AG04449 (cell line): ENCODE measurements at regions of chr2 and their contacts with region 1.

Region 1: GRCh38 chr2:179129574-179130238 is 79.8 kb upstream of the CCDC141 start:
- DNase-seq: no peak
- H3K4me3 ChIP-seq: no peak overlapping the region
- CTCF ChIP-seq: peak; percentile 34

Region 2: DNA sequence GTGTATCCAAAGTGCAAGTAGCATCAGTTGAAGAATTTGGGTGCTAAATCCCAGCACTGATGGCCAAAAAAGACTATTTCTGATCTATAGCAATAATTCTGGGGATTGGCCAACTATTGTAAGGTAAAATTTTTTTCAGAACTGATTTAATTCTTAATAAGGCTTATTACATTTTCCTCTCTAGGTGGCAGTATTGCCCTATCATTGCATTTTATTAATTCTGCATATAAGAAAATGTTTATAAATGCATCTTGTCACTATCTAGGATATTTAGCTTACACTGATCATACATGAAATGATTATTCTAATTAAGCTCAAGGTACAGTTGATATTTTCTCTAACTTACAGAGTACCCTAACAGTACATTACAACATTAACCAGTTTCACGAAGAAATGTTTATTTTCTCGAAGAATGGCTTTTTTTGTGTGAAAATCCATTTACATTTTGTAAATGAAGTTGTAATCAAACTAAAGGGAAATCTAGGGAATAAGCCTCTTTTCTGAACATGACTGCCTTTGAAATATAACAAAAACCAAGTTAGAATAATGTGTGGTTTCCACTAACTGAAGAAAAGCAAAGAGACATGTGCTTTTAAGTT is 333.5 kb before region 1 on chr2:
- CTCF ChIA-PET with region 1: interaction called, 16 read pairs
- POLR2A ChIA-PET with region 1: no interaction called
- DNase-seq: peak; percentile 5
- H3K4me3 ChIP-seq: no peak overlapping the region
- CTCF ChIP-seq: peak; percentile 27

Region 3: GRCh38 chr2:178891265-178891958 is 238.3 kb before region 1 on chr2:
- CTCF ChIA-PET with region 1: interaction called, 10 read pairs
- POLR2A ChIA-PET with region 1: no interaction called
- DNase-seq: no peak
- H3K4me3 ChIP-seq: no peak overlapping the region
- CTCF ChIP-seq: peak; percentile 74

Region 4: DNA sequence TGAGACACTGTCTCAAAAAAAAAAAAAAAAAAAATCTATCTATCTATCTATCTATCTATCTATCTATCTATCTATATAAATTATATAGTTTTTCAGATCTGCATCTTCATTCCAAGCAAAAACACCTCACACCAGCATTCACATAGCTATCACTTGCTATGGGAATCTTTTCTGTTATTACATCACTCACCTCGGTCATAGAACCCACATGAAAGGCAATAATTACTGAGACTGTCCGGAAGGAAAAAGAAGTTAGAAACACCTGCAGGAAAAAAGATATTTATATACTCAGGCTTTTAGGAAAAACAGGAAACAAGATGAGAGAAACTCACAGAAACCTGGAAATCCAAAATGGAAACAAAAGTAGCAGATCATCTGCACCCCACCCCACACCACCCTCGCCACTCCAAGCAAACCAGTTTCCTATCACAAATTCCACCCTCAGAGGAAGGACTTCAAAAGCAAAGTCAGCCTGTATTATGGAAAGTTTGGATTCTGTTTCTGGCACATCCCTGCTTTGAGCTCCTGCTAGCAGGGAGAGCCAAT is 57.8 kb before region 1 on chr2:
- CTCF ChIA-PET with region 1: no interaction called
- POLR2A ChIA-PET with region 1: no interaction called
- DNase-seq: no peak
- H3K4me3 ChIP-seq: no peak overlapping the region
- CTCF ChIP-seq: no peak

Region 5: GRCh38 chr2:179106676-179107428 is 22.9 kb before region 1 on chr2:
- CTCF ChIA-PET with region 1: interaction called, 11 read pairs
- POLR2A ChIA-PET with region 1: no interaction called
- DNase-seq: peak; percentile 62
- H3K4me3 ChIP-seq: no peak overlapping the region
- CTCF ChIP-seq: no peak

Region 6: DNA sequence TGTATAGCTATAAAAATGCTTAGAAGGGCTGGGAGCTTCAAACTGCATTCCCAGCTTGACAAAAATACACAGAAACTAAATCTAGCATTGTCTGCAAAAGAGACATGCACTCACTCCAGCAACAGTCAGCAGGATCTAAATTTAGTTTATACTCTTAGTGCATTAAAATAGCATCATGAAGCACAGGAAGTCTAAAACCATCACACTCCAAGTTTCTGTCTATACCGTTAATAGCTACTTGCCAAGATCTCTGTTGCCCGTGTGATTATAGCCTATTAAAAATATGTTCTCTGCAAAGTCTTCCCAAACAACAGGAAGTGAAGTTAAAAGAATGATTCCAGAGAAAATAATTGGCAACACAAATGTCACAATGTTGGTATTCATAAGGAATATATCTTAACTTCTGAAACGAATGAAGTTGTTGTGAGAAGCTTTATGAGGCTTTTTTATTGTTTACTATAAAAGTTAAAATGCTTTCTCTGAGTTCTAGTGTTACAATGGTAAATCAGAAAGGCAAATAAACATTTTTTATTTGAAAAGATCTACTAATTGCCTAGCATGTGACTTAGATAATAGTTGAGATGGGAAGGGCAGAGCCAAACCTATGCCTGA is 547.5 kb after region 1 on chr2:
- CTCF ChIA-PET with region 1: no interaction called
- POLR2A ChIA-PET with region 1: no interaction called
- DNase-seq: no peak
- H3K4me3 ChIP-seq: no peak overlapping the region
- CTCF ChIP-seq: no peak